Dendritic cell treated with granulocyte-macrophage colony-stimulating factor and Interleukin-4, amounts not matched to agents 40 ng/mL and 50 ng/mL, for 4 days (primary cell): ENCODE measurements at regions of chr12 and their contacts with region 1.

Region 1: DNA sequence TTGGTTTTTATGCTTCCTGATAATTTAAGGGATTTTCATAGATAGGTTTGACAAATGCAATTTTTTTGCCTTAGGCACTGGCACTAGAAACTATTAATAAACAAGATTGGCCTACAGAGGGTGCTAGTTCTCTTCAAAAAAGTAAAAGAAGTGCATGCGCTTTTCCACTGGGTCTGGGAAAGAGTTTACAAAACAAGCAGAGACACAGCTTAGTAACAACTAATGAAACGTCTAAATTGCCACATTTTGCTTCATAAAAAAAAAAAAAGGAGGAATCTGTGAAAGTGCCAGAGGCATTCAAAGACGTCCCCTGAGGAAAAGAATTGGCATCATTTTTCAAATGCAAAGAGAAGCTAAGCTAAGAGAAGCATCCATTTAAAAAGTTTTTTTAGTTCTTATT is 58.3 kb upstream of the EEA1 start:
- H3K4me3 Mint-ChIP-seq: peak overlapping the region; percentile 42
- H3K27ac Mint-ChIP-seq: peak overlapping the region; percentile 92
- H3K4me1 Mint-ChIP-seq: peaks cover 8% of the 10 kb centered on the region
- H3K27me3 Mint-ChIP-seq: no peaks in the 10 kb centered on the region

Region 2: DNA sequence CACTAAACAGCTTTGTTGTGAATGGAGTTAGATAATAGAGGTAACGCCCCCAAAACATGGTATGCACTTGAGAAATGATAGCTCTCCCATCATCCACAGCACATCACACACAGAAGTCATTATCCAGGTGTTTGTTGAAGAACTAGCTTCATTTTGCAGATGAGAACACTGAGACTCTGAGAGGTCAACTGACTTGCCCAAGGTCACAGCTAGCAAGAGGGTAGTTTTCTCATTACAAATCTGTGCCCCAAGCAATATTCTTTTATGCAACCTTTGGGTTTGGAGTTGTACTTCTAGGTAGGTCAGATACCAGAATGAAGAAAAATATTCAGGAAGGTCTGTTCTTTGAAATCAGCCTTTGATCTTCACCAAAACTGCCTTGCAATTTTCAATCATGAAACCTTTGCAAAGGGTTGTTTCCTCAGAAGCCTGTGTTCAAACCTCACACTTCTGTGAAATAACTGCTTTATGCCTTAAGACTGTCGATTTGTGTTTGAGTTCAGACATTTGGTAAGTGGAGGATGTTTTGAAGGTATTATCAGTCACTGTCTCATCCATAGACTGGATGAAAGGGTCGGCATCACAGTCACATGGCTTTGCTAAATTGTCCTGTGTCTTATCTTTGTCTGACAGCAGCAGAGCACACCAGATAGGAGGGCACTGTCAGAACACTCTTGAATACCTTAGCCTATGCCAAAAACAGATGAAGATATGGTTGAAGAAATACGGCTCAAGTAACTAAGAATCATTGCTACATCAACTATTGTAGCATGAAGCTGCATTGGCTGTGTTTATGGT is 608.5 kb before region 1 on chr12:
- intact Hi-C with region 1: no loop called
- H3K4me3 Mint-ChIP-seq: no peak overlapping the region
- H3K27ac Mint-ChIP-seq: no peak overlapping the region
- H3K4me1 Mint-ChIP-seq: no peaks in the 10 kb centered on the region
- H3K27me3 Mint-ChIP-seq: no peaks in the 10 kb centered on the region

Region 3: GRCh38 chr12:92928962-92929915 is 58.1 kb before region 1 on chr12 and contains the start of gene EEA1:
- intact Hi-C with region 1: loop called (anchors 5 kb)
- H3K4me3 Mint-ChIP-seq: peak within 1 kb of the TSS; percentile 88
- H3K27ac Mint-ChIP-seq: peak within 1 kb of the TSS; percentile 94
- H3K4me1 Mint-ChIP-seq: peaks cover 20% of the 10 kb centered on the region
- H3K27me3 Mint-ChIP-seq: no peaks in the 10 kb centered on the region

Region 4: GRCh38 chr12:93098077-93098476 is 110.7 kb after region 1 on chr12:
- intact Hi-C with region 1: loop called (anchors 5 kb)
- H3K4me3 Mint-ChIP-seq: no peak overlapping the region
- H3K27ac Mint-ChIP-seq: peak overlapping the region; percentile 57
- H3K4me1 Mint-ChIP-seq: peaks cover 7% of the 10 kb centered on the region
- H3K27me3 Mint-ChIP-seq: no peaks in the 10 kb centered on the region

Region 5: DNA sequence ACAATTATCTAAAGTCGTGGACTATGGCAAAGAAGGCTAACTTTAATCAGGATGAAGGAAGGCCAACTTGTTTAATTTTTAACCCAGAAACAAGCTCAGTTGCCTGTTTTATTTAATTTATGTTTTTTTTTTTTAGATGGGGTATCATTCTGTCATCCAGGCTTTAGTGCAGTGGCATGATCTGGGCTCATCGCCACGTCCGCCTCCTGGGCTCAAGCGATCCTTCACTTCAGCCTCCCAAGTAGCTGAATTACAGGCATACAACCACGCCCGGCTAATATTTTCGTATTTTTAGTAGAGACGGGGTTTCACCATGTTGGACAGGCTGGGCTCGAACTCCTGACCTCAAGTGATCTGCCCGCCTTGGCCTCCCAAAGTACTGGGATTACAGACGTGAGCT is 410.1 kb after region 1 on chr12:
- intact Hi-C with region 1: loop called (anchors 2 kb)
- H3K4me3 Mint-ChIP-seq: no peak overlapping the region
- H3K27ac Mint-ChIP-seq: no peak overlapping the region
- H3K4me1 Mint-ChIP-seq: no peaks in the 10 kb centered on the region
- H3K27me3 Mint-ChIP-seq: no peaks in the 10 kb centered on the region

Region 6: DNA sequence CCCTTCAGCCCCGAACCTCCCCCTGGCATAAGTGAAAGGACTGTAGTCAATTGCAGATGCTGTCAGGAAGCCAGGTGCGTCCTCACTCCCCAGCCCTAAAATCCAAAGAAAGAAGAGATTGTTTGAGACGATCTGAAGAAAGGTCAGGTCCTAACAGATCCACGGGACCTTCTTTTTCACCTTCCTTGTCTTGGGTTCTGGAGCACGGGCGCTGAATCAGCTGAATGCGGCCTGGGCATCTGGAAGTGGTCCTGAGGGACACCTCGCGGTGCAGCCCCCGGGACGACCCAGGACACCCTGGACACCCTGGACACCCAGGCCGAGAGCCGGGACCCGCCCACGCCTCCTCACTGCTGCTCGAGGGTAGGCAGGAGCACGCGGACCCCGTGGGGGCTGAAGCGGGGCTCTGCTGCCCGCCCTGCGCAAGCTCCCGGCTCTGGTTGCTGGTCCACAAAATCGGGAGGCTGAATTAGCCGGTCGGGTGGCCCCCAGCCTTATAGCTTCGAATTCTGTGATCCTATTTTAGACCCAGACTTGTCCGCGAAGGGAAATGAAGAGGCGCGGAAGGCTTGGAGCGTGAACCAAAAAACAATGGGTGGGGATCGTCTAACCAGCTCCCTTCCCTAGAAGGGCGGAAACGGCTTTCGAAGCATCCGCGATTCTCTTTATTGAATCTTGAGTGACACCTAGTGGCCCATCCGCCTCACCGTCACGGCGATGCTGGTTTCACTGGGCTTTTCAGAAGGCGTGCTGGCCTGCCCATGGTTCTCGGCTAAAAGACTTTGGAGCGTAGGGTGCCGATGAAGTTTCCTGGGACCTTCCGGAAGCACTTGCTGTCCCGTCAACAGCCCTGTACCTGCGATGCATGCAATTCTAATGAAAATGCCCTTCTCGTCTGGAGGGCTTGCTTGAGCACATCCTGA is 1114.6 kb after region 1 on chr12:
- intact Hi-C with region 1: loop called (anchors 5 kb)
- H3K4me3 Mint-ChIP-seq: peak overlapping the region; percentile 68
- H3K27ac Mint-ChIP-seq: no peak overlapping the region
- H3K4me1 Mint-ChIP-seq: peaks cover 23% of the 10 kb centered on the region
- H3K27me3 Mint-ChIP-seq: peaks cover 50% of the 10 kb centered on the region